ENCODE measurements at regions of chr6 and their contacts with region 1.

Region 1: GRCh38 chr6:110958329-110959192 is at the start of gene GTF3C6:
- DNase-seq: peak; percentile 98
- H3K4me3 ChIP-seq: peak within 1 kb of the TSS; percentile 80
- H3K27ac ChIP-seq: peak within 1 kb of the TSS; percentile 92
- H3K4me1 ChIP-seq: 0 out of 2 replicates have a peak, but pooled peaks cover 3% of the 10 kb centered on the region
- H3K27me3 ChIP-seq: no peaks in the 10 kb centered on the region
- total RNA-seq, gene GTF3C6: 41.5 and 46.6 TPM in 2 replicates

Region 2: GRCh38 chr6:110528101-110528929 is 430.2 kb before region 1 on chr6:
- in situ Hi-C with region 1: loop called (anchors 25 kb)
- DNase-seq: peak; percentile 90
- H3K4me3 ChIP-seq: 0 out of 2 replicates have a peak overlapping the region, but pooled peaks have one; percentile 4
- H3K27ac ChIP-seq: peak overlapping the region; percentile 62
- H3K4me1 ChIP-seq: peaks cover 36% of the 10 kb centered on the region
- H3K27me3 ChIP-seq: no peaks in the 10 kb centered on the region

Region 3: DNA sequence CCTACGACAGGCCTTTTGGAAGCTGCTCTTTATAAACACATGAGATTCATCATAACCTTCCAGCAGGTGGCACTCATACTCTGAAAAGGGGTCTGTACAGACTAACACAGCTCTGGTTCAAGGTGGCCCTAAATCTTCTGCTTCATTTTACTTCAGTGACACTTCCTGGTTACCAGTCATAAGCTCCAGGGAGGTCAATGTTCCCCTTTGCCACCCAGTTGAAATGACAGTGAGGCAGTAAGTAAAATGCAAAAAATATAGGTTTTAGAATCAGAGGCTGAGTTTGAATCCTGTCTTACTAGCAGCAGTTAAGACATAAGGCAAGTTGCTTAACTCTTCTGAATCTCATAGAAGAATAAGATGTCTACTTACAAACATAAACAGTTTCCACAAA is 276.1 kb before region 1 on chr6:
- in situ Hi-C with region 1: loop called (anchors 10 kb)
- DNase-seq: peak; percentile 82
- H3K4me3 ChIP-seq: no peak overlapping the region
- H3K27ac ChIP-seq: no peak overlapping the region
- H3K4me1 ChIP-seq: no peaks in the 10 kb centered on the region
- H3K27me3 ChIP-seq: no peaks in the 10 kb centered on the region